H1 (cell line): ENCODE measurements at regions of chr12 and their contacts with region 1.

Region 1: DNA sequence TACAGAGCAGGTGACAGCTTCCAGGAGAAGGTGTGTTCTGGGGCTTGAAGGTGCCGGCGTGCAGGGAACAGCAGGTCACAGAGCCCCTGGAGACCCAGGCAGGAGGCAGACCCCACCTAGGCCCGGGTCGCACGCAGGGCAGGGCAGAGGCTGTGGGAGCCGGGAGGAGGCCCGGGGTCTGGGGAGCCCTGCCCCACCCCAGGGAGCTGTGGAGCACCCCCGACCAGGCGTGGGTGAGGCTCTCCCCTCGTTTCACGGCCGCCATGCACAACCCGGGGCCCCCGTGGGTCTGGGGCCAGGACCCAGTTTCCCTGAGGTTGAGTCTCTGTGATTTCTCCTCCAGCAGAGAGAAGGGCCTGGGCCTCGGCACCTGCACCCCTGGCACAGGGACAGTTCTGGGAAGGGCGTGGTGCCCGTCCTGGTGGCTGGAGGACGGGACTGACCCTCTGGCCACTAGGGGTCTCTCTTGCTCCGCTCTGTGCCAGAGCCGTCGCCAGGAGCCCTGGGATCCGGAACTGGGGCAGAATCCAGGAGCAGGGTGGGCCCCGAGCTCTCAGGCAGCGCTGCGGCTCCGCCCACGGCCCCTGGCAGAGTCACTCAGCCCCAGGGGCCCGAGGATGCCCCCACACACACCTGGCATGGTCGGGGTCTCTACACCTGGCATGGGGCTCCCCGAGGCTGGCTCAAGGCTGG is 75.2 kb upstream of the FBRSL1 start:
- DNase-seq: peak in 1 of 2 experiments; percentile 93
- H3K4me3 ChIP-seq: no peak overlapping the region
- H3K27ac ChIP-seq: no peak overlapping the region
- H3K4me1 ChIP-seq: peaks cover 0 to 2% (median 0%) of the 10 kb centered on the region in 4 experiments; a peak in 2 of 7 replicates
- H3K27me3 ChIP-seq: peaks cover 11 to 41% (median 33%) of the 10 kb centered on the region in 4 experiments; a peak in 6 of 7 replicates
- CTCF ChIP-seq: peak in 2 of 3 experiments; percentile 92 to 96; a peak in 3 of 4 replicates
- EP300 ChIP-seq: no peak
- POLR2A ChIP-seq: no peak
- RAD21 ChIP-seq: peak; percentile 97 to 99

Region 2: DNA sequence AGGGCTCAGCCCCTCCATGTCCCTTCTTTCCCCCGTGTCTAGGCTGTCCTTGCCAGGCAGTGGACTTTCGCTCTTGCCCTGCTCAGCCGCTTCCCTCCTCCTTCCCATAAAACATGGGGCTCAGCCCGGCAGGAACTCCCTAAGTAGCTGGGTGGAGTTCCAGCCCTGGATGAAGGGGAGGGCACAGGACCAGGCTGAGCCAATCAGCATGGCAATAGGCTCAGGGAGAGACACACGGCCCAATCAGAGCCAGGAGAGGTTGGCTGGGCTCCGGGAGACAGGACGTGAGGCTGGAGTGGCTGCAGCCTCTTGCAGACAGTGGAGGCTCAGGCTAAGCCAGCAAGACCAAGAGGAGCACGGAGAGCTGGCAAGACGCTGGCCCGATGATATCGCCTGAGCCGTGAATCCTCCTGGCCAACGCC is 139.7 kb before region 1 on chr12:
- CTCF ChIA-PET with region 1: interaction called, 23 read pairs
- POLR2A ChIA-PET with region 1: no interaction called
- DNase-seq: peak in 1 of 2 experiments; percentile 64
- H3K4me3 ChIP-seq: 0 out of 8 replicates have a peak overlapping the region, but pooled peaks of 1 of the 4 experiments have one; percentile 14
- H3K27ac ChIP-seq: no peak overlapping the region
- H3K4me1 ChIP-seq: peaks cover 0 to 16% (median 12%) of the 10 kb centered on the region in 4 experiments; a peak in 6 of 7 replicates
- H3K27me3 ChIP-seq: peaks cover 0 to 8% (median 0%) of the 10 kb centered on the region in 4 experiments; a peak in 4 of 7 replicates
- CTCF ChIP-seq: no peak
- EP300 ChIP-seq: no peak
- POLR2A ChIP-seq: no peak
- RAD21 ChIP-seq: no peak

Region 3: GRCh38 chr12:132300789-132301722 is 113.7 kb before region 1 on chr12:
- CTCF ChIA-PET with region 1: no interaction called
- POLR2A ChIA-PET with region 1: no interaction called
- DNase-seq: no peak
- H3K4me3 ChIP-seq: no peak overlapping the region
- H3K27ac ChIP-seq: no peak overlapping the region
- H3K4me1 ChIP-seq: no peaks in the 10 kb centered on the region; a peak in 1 of 7 replicates
- H3K27me3 ChIP-seq: peaks cover 1 to 14% (median 12%) of the 10 kb centered on the region in 4 experiments; a peak in 5 of 7 replicates
- CTCF ChIP-seq: no peak
- EP300 ChIP-seq: no peak
- POLR2A ChIP-seq: no peak
- RAD21 ChIP-seq: no peak

Region 4: GRCh38 chr12:132385923-132386751 is 28.6 kb before region 1 on chr12:
- CTCF ChIA-PET with region 1: interaction called, 21 read pairs
- POLR2A ChIA-PET with region 1: interaction called, 7 read pairs
- DNase-seq: no peak
- H3K4me3 ChIP-seq: no peak overlapping the region
- H3K27ac ChIP-seq: no peak overlapping the region
- H3K4me1 ChIP-seq: peaks cover 0 to 26% (median 15%) of the 10 kb centered on the region in 4 experiments; a peak in 6 of 7 replicates
- H3K27me3 ChIP-seq: peaks cover 12 to 73% (median 61%) of the 10 kb centered on the region in 4 experiments
- CTCF ChIP-seq: peak in 2 of 3 experiments; percentile 15; a peak in 1 of 4 replicates
- EP300 ChIP-seq: no peak
- POLR2A ChIP-seq: no peak
- RAD21 ChIP-seq: peak in 1 of 2 experiments; percentile 27; a peak in 1 of 4 replicates

Region 5: DNA sequence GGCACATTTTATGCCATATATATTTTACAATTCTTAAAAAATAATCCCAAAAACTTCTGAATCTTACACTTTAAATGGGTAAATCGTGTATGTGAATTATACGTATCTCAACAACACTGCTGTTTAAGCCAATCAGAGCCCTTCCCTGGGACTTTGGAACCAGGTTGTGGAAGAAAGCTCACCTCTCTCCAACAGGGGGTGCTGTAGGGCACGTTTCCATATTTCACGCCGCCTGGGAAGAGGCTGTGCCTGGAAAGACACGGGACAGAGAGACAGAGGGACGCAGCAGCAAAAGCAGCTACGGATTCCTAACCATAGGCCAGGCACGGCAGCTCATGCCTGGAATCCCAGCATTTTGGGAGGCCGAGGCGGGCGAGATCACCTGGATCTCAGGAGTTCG is 45.8 kb after region 1 on chr12:
- CTCF ChIA-PET with region 1: interaction called, 10 read pairs
- POLR2A ChIA-PET with region 1: no interaction called
- DNase-seq: peak in 1 of 2 experiments; percentile 75
- H3K4me3 ChIP-seq: no peak overlapping the region
- H3K27ac ChIP-seq: no peak overlapping the region
- H3K4me1 ChIP-seq: no peaks in the 10 kb centered on the region
- H3K27me3 ChIP-seq: peaks cover 31 to 60% (median 54%) of the 10 kb centered on the region in 4 experiments
- CTCF ChIP-seq: peak in 2 of 3 experiments; percentile 66 to 79; a peak in 3 of 4 replicates
- EP300 ChIP-seq: no peak
- POLR2A ChIP-seq: no peak
- RAD21 ChIP-seq: peak; percentile 66 to 71

Region 6: GRCh38 chr12:132554842-132555630 is 140.3 kb after region 1 on chr12:
- CTCF ChIA-PET with region 1: interaction called, 22 read pairs
- POLR2A ChIA-PET with region 1: no interaction called
- DNase-seq: peak in 1 of 2 experiments; percentile 70
- H3K4me3 ChIP-seq: no peak overlapping the region
- H3K27ac ChIP-seq: no peak overlapping the region
- H3K4me1 ChIP-seq: peaks cover 0 to 8% (median 6%) of the 10 kb centered on the region in 4 experiments; a peak in 5 of 7 replicates
- H3K27me3 ChIP-seq: peaks cover 32 to 87% (median 77%) of the 10 kb centered on the region in 4 experiments
- CTCF ChIP-seq: peak in 2 of 3 experiments; percentile 53 to 64; a peak in 3 of 4 replicates
- EP300 ChIP-seq: no peak
- POLR2A ChIP-seq: no peak
- RAD21 ChIP-seq: peak; percentile 42 to 50; a peak in 3 of 4 replicates

Region 7: DNA sequence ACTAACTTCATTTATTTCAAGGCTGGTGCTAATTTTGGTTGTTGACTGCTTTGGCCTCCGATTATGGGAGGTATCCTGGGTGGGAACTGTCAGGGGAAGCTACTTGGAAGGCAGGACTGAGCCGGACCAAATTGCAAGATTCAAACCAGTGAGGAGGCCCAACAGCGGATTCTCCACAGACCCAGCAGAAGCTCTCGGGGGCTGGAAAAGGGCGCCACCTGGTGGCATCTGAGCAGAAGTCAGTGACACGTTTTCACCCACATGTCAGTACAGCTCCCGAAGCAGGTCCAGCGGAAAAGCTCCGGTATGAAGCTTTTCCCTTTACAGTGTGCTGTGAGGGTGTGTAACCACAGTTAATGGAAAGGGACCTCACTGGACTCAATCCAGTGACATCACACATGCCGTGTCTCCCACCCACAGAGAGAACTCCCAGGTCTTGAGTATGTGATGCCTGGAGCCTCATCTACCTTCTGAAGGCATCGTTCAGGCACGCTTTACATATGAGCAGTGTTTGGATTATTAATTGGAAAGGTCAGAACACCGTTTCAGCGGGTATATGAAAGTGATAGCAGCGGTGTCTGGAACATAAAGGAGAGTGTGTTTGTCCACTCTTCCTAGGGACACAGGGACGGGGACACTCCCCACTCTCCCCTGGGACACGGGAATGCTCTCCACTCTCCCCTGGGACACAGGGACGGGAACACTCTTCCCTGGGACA is 200.2 kb after region 1 on chr12:
- CTCF ChIA-PET with region 1: interaction called, 19 read pairs
- POLR2A ChIA-PET with region 1: no interaction called
- DNase-seq: peak; percentile 58 to 89
- H3K4me3 ChIP-seq: no peak overlapping the region
- H3K27ac ChIP-seq: no peak overlapping the region
- H3K4me1 ChIP-seq: peaks cover 0 to 3% (median 0%) of the 10 kb centered on the region in 4 experiments; a peak in 2 of 7 replicates
- H3K27me3 ChIP-seq: peaks cover 35 to 82% (median 65%) of the 10 kb centered on the region in 4 experiments
- CTCF ChIP-seq: peak; percentile 90 to 96 (median 95)
- EP300 ChIP-seq: no peak
- POLR2A ChIP-seq: no peak
- RAD21 ChIP-seq: peak; percentile 88 to 94

Region 8: GRCh38 chr12:132651444-132652100 is 236.8 kb after region 1 on chr12:
- CTCF ChIA-PET with region 1: no interaction called
- POLR2A ChIA-PET with region 1: no interaction called
- DNase-seq: no peak
- H3K4me3 ChIP-seq: no peak overlapping the region
- H3K27ac ChIP-seq: no peak overlapping the region
- H3K4me1 ChIP-seq: no peaks in the 10 kb centered on the region
- H3K27me3 ChIP-seq: no peaks in the 10 kb centered on the region
- CTCF ChIP-seq: no peak
- EP300 ChIP-seq: no peak
- POLR2A ChIP-seq: no peak
- RAD21 ChIP-seq: no peak